ENCODE measurements at regions of chr6 and their contacts with region 1.

Region 1: DNA sequence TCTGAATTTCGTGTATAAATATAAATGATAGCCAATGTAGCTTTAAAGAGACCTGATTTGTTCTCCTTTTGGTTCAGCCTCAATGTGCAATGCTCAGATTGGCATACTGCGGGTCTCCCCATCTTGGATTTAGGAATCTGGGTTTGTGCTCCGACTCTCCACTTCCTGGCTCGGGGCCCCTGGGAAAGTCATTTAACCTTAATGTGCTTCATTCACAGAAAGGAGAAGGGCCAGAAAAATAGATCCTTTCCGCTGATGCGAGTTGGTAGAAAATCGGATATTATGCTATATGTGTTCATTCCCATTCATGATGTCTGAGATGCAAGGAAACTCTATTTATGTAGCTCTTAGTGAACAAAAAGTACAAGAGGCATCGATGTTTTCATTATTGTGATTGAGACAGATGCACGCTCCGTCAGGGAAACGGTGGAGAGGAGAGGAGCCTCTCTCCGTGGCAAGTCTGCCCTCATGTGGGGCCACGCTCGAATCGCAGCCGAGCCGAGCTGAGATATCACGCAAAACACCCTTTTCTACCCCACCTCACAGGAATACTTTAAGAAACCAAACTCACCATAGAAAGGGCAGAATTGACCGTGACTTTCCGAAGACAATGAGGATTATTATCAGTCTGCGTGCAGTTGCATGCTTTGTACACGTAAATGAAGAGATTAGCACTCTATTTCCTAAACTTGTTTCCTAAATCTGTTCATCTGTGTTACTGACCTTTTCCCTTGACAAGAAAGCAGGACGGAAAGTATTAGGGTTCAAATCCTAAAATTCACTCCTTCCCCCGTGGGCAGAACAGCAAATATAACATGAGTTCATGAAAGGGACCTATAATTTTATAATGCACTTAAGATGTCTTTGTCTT is 136.6 kb downstream of the COL9A1 start:
- DNase-seq: peak; percentile 59 to 78 (median 69)
- ATAC-seq: peak; percentile 84
- H3K4me3 ChIP-seq: no peak overlapping the region
- H3K27ac ChIP-seq: no peak overlapping the region
- H3K4me1 ChIP-seq: peaks cover 5 to 27% of the 10 kb centered on the region in 2 experiments
- H3K27me3 ChIP-seq: no peaks in the 10 kb centered on the region; a peak in 2 of 5 replicates
- CTCF ChIP-seq: peak; percentile 78 to 92 (median 86)
- EP300 ChIP-seq: no peak
- POLR2A ChIP-seq: no peak
- RAD21 ChIP-seq: peak; percentile 77 to 87

Region 2: GRCh38 chr6:70072540-70073179 is 93.7 kb before region 1 on chr6:
- CTCF ChIA-PET with region 1: no interaction called
- POLR2A ChIA-PET with region 1: no interaction called
- in situ Hi-C with region 1: no loop called
- intact Hi-C with region 1: no loop called
- DNase-seq: no peak
- ATAC-seq: no peak
- H3K4me3 ChIP-seq: no peak overlapping the region
- H3K27ac ChIP-seq: no peak overlapping the region
- H3K4me1 ChIP-seq: no peaks in the 10 kb centered on the region
- H3K27me3 ChIP-seq: no peaks in the 10 kb centered on the region
- CTCF ChIP-seq: no peak
- EP300 ChIP-seq: no peak
- POLR2A ChIP-seq: no peak
- RAD21 ChIP-seq: no peak

Region 3: DNA sequence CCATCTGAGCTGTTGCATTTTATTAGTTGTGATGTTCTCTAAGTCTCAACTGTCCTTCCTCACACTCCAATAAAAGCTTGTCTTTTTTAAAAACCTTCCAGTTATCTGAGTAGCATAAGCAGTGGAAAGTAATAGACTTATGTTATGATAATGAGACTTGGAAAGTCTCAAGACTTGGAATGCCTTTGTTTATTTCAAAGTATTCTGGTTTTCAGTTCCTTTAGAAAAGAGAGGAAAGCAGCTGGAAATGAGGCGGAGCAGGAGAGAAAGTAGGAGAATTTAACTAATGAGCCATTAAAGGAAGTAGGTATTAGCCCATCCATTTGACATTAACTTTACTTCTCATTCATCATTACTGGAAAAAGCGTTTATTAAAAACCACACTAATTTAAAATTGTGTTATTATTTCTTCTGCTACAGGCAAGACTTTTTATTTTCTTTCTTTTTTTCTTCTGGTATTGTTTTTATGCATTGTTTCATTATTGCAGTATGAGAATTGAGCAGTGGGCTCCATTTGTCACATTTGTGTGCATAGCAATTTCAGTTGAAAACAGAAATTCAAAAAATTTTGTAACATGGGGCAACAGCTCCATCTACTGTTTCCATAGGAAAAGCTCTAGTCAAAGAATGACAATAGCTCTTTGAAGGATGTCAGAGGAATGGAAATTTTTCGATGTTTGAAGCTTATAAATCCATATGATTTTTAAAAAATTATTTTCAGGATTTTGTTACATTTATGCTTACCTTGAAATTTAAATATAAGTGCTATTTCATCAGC is 58.3 kb before region 1 on chr6:
- CTCF ChIA-PET with region 1: no interaction called
- POLR2A ChIA-PET with region 1: no interaction called
- in situ Hi-C with region 1: no loop called
- intact Hi-C with region 1: loop called (anchors 2 kb)
- DNase-seq: peak; percentile 34 to 55 (median 36)
- ATAC-seq: peak; percentile 61; the same call in 2 of the 3 replicates
- H3K4me3 ChIP-seq: no peak overlapping the region
- H3K27ac ChIP-seq: no peak overlapping the region
- H3K4me1 ChIP-seq: no peaks in the 10 kb centered on the region
- H3K27me3 ChIP-seq: no peaks in the 10 kb centered on the region; a peak in 1 of 5 replicates
- CTCF ChIP-seq: peak; percentile 30 to 75 (median 53); a peak in 4 of 6 replicates
- EP300 ChIP-seq: no peak
- POLR2A ChIP-seq: no peak
- RAD21 ChIP-seq: peak; percentile 83 to 84